ENCODE measurements at regions of chr5 and their contacts with region 1.

Region 1: GRCh38 chr5:102681407-102681983 is 73.6 kb upstream of the PAM start:
- DNase-seq: peak; percentile 29
- H3K4me3 Mint-ChIP-seq: no peak overlapping the region
- H3K27ac Mint-ChIP-seq: no peak overlapping the region
- H3K4me1 Mint-ChIP-seq: no peaks in the 10 kb centered on the region
- H3K27me3 Mint-ChIP-seq: peaks cover 5% of the 10 kb centered on the region

Region 2: GRCh38 chr5:102146768-102147167 is 534.7 kb before region 1 on chr5:
- intact Hi-C with region 1: no loop called
- DNase-seq: no peak
- H3K4me3 Mint-ChIP-seq: no peak overlapping the region
- H3K27ac Mint-ChIP-seq: no peak overlapping the region
- H3K4me1 Mint-ChIP-seq: no peaks in the 10 kb centered on the region
- H3K27me3 Mint-ChIP-seq: no peaks in the 10 kb centered on the region

Region 3: GRCh38 chr5:102747386-102748166 is 66.1 kb after region 1 on chr5:
- intact Hi-C with region 1: loop called (anchors 5 kb)
- DNase-seq: no peak
- H3K4me3 Mint-ChIP-seq: peak overlapping the region; percentile 20
- H3K27ac Mint-ChIP-seq: peak overlapping the region; percentile 63
- H3K4me1 Mint-ChIP-seq: peaks cover 21% of the 10 kb centered on the region
- H3K27me3 Mint-ChIP-seq: no peaks in the 10 kb centered on the region

Region 4: GRCh38 chr5:102792705-102793104 is 111.2 kb after region 1 on chr5:
- intact Hi-C with region 1: loop called (anchors 1 kb)
- DNase-seq: no peak
- H3K4me3 Mint-ChIP-seq: no peak overlapping the region
- H3K27ac Mint-ChIP-seq: no peak overlapping the region
- H3K4me1 Mint-ChIP-seq: peaks cover 23% of the 10 kb centered on the region
- H3K27me3 Mint-ChIP-seq: no peaks in the 10 kb centered on the region

Region 5: DNA sequence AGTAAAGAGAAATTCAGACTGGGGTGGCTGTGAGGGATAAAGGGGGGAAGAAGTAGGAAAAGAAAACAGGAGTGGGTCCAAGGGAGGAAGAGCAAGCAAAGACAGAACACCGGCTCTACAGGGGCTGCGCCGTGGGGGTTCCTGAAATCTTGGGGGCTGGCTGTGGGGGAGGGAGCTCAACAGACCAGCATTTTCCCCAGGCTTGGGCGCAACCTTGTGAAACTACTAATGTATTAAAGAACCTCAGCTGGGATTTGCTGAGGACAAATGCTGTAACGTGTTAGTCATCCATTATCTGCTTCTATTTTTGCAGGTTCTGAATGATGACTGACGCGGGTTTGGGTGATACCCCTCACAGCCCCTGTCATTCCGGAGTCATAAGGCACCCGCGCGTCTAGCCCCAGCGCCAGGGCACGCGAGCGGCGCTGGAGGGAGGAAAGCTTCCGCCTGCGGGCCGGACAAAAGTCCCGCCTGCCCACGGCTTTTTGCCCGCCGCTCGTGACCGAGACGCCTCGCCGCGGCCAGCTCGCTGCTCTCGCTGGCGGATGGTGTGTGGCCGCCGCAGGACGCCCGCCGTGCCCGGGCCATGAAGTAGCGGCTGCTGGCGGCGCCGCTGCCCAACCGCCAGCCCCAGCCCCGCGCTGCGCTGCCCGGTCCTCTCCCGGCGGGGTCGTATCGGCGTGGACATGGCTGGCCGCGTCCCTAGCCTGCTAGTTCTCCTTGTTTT is 184.2 kb after region 1 on chr5:
- intact Hi-C with region 1: loop called (anchors 5 kb)
- DNase-seq: no peak
- H3K4me3 Mint-ChIP-seq: peak overlapping the region; percentile 69
- H3K27ac Mint-ChIP-seq: no peak overlapping the region
- H3K4me1 Mint-ChIP-seq: peaks cover 11% of the 10 kb centered on the region
- H3K27me3 Mint-ChIP-seq: peaks cover 16% of the 10 kb centered on the region

Region 6: DNA sequence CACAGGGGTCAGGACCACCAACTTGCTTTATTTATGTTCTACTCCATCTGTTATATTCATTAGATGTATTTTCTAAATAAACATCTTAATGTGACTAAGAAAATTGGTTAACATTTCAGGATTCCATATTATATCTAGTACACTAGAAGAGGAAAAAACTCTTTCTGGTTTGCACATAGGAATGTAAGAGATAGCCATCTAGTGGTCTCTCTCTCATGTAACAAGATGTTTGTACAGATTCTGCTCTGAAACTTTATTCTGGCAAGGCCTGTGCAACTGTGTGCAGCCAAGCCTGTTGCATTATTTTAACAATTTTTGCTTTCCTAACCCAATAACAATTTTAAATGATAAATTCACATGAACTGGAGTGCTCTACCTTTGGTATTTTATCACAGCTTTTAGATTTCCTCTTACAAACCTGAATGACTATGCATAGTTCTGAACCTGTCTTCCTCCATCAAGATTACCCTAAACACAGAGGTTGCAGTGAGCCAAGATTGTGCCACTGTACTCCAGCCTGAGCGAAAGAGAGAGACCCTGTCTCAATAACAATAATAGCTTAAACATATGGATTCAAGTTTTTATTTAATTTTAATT is 290.3 kb after region 1 on chr5:
- intact Hi-C with region 1: loop called (anchors 5 kb)
- DNase-seq: no peak
- H3K4me3 Mint-ChIP-seq: no peak overlapping the region
- H3K27ac Mint-ChIP-seq: no peak overlapping the region
- H3K4me1 Mint-ChIP-seq: no peaks in the 10 kb centered on the region
- H3K27me3 Mint-ChIP-seq: peaks cover 1% of the 10 kb centered on the region

Region 7: GRCh38 chr5:103041071-103041676 is 359.7 kb after region 1 on chr5:
- intact Hi-C with region 1: loop called (anchors 1 kb)
- DNase-seq: no peak
- H3K4me3 Mint-ChIP-seq: no peak overlapping the region
- H3K27ac Mint-ChIP-seq: no peak overlapping the region
- H3K4me1 Mint-ChIP-seq: no peaks in the 10 kb centered on the region
- H3K27me3 Mint-ChIP-seq: peaks cover 14% of the 10 kb centered on the region

Region 8: DNA sequence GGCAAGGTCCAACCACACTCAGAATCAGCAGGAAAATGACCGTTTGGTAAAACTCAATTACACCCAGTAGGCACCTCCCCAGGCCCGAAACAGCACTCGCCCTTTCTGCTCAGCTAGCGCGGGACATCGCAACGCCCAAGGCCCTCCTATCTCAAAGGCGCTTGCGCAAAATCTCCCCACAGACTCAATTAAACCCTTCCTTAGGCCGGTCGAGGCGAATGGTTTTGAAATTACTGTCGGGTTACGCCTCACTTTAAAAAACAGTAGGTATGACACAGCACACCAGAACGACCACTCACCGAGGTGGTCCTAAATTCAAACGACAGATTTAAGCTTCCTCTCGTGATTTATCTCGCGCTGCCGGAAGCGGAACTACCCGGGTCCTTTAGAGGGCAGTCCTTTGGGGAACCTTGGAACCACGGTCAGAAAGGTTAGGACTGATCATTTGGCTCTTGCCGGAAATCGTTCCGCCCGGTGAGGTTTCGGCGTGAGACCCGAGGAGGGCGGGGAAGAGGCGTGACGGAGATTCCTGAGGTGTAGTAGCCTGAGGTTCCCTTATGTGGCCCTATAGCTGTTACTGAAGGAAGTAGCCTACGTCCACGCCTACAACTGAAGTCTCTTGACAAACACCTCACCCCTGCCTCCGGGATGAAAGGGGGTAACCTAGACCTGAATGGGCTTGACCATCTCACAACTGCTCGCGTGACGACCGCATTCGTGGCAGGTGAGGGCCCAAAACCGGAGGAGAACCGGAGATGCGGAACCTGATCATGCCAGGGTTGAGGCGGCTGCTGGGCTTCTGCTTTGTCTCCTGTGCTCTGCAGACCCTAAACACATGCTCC is 438.5 kb after region 1 on chr5 and contains the starts of genes GIN1 and PPIP5K2:
- intact Hi-C with region 1: loop called (anchors 5 kb)
- DNase-seq: peak; percentile 96
- H3K4me3 Mint-ChIP-seq: peak within 1 kb of the TSS; percentile 93
- H3K27ac Mint-ChIP-seq: peak within 1 kb of the TSS; percentile 96
- H3K4me1 Mint-ChIP-seq: peaks cover 41% of the 10 kb centered on the region
- H3K27me3 Mint-ChIP-seq: no peaks in the 10 kb centered on the region
- total RNA-seq, gene GIN1: 8.6 and 9.3 TPM in 2 replicates
- total RNA-seq, gene PPIP5K2: 47.6 and 52.7 TPM in 2 replicates